Activated B cell treated with CpG ODN at 0.5 μM for 24 hours (primary cell): ENCODE measurements at regions of chr1 and their contacts with region 1.

Region 1: GRCh38 chr1:166166695-166167571 is at the start of gene FAM78B:
- DNase-seq: peak; percentile 55
- ATAC-seq: peak; percentile 84
- H3K4me3 Mint-ChIP-seq: peak within 1 kb of the TSS; percentile 77
- H3K27ac Mint-ChIP-seq: no peak within 1 kb of the TSS
- H3K4me1 Mint-ChIP-seq: peaks cover 19% of the 10 kb centered on the region
- H3K27me3 Mint-ChIP-seq: peaks cover 25% of the 10 kb centered on the region
- CTCF ChIP-seq: no peak
- total RNA-seq, gene FAM78B: 0.64 and 1.00 TPM in 2 replicates

Region 2: GRCh38 chr1:165924117-165924516 is 242.8 kb before region 1 on chr1:
- CTCF ChIA-PET with region 1: no interaction called
- POLR2A ChIA-PET with region 1: no interaction called
- intact Hi-C with region 1: loop called (anchors 2 kb)
- DNase-seq: no peak
- ATAC-seq: no peak
- H3K4me3 Mint-ChIP-seq: no peak overlapping the region
- H3K27ac Mint-ChIP-seq: no peak overlapping the region
- H3K4me1 Mint-ChIP-seq: no peaks in the 10 kb centered on the region
- H3K27me3 Mint-ChIP-seq: peaks cover 13% of the 10 kb centered on the region
- CTCF ChIP-seq: no peak